CD8-positive, alpha-beta T cell (primary cell): ENCODE measurements at regions of chr3 and their contacts with region 1.

Region 1: DNA sequence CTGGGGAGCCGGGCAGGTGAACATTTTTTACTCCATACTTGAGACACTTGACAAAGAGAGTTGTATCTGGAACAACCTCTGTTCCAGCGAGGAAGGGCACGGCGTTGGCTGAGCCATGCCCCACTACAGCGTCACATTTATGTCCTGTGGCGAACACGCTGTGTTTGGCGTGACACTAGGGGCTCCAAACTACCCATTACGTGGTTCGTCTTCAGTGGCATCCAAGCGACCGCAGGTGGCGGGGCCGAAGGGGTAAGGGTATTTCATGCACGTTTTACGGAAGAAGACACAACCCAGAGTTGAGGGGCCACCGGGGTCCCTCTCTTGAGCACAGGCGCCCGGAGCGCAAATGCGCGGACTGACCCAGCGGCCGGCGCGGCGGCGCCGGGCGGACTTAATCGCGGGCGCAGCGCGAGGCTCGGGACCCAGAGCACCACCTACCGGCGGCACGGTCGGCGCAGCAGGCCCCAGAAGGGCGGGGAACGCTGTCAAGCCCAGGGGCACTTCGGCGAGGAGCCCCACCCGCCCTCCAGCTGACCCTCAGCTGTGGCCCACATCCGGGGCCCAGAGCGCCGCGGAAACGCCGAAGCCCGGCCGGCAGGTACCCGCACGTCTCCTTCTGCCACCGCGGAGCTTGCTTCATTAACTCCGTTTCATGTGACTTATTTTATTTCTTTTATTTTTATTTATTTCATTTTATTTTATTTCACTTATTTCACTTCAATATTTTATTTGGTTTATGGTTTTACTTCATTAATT is 36.4 kb upstream of the TRIM71 start:
- DNase-seq: peak; percentile 16 to 75 (median 57)
- ATAC-seq: peak; percentile 85
- H3K4me3 ChIP-seq: peak overlapping the region; percentile 59 to 73
- H3K4me3 Mint-ChIP-seq: peak overlapping the region; percentile 90
- H3K27ac ChIP-seq: no peak overlapping the region
- H3K27ac Mint-ChIP-seq: peak overlapping the region; percentile 22
- H3K4me1 ChIP-seq: no peaks in the 10 kb centered on the region
- H3K4me1 Mint-ChIP-seq: peaks cover 4% of the 10 kb centered on the region
- H3K27me3 ChIP-seq: no peaks in the 10 kb centered on the region
- H3K27me3 Mint-ChIP-seq: peaks cover 5% of the 10 kb centered on the region
- CTCF ChIP-seq: peak; percentile 72

Region 2: DNA sequence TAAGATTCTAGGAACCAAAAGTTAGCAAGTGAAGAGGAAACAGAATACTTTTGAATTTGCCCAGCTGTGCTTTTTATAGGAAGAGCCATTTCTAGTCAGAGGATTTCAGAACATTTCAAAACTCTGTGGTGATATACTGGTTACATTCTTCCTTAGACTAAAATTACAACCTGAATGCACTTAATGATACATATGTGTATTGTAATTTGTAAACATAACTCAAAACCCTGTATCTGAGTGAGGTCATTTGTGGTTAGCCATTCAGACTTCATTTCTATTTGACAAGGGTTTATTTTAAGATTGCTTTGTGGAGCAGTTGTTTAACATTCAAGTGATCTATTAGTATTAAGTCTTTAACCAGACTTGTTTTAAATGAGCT is 23.0 kb before region 1 on chr3:
- CTCF ChIA-PET with region 1: interaction called, 13 read pairs
- POLR2A ChIA-PET with region 1: no interaction called
- intact Hi-C with region 1: no loop called
- DNase-seq: no peak
- ATAC-seq: no peak
- H3K4me3 ChIP-seq: no peak overlapping the region
- H3K4me3 Mint-ChIP-seq: no peak overlapping the region
- H3K27ac ChIP-seq: no peak overlapping the region
- H3K27ac Mint-ChIP-seq: no peak overlapping the region
- H3K4me1 ChIP-seq: no peaks in the 10 kb centered on the region
- H3K4me1 Mint-ChIP-seq: no peaks in the 10 kb centered on the region
- H3K27me3 ChIP-seq: no peaks in the 10 kb centered on the region
- H3K27me3 Mint-ChIP-seq: no peaks in the 10 kb centered on the region
- CTCF ChIP-seq: no peak

Region 3: GRCh38 chr3:32764481-32764880 is 16.9 kb before region 1 on chr3:
- CTCF ChIA-PET with region 1: interaction called, 18 read pairs
- POLR2A ChIA-PET with region 1: no interaction called
- intact Hi-C with region 1: no loop called
- DNase-seq: no peak
- ATAC-seq: no peak
- H3K4me3 ChIP-seq: no peak overlapping the region
- H3K4me3 Mint-ChIP-seq: no peak overlapping the region
- H3K27ac ChIP-seq: no peak overlapping the region
- H3K27ac Mint-ChIP-seq: no peak overlapping the region
- H3K4me1 ChIP-seq: no peaks in the 10 kb centered on the region
- H3K4me1 Mint-ChIP-seq: no peaks in the 10 kb centered on the region
- H3K27me3 ChIP-seq: no peaks in the 10 kb centered on the region
- H3K27me3 Mint-ChIP-seq: no peaks in the 10 kb centered on the region
- CTCF ChIP-seq: no peak